Sciatic nerve (tissue), 2 donors: ENCODE measurements at regions of chr2 and their contacts with region 1.

Region 1: DNA sequence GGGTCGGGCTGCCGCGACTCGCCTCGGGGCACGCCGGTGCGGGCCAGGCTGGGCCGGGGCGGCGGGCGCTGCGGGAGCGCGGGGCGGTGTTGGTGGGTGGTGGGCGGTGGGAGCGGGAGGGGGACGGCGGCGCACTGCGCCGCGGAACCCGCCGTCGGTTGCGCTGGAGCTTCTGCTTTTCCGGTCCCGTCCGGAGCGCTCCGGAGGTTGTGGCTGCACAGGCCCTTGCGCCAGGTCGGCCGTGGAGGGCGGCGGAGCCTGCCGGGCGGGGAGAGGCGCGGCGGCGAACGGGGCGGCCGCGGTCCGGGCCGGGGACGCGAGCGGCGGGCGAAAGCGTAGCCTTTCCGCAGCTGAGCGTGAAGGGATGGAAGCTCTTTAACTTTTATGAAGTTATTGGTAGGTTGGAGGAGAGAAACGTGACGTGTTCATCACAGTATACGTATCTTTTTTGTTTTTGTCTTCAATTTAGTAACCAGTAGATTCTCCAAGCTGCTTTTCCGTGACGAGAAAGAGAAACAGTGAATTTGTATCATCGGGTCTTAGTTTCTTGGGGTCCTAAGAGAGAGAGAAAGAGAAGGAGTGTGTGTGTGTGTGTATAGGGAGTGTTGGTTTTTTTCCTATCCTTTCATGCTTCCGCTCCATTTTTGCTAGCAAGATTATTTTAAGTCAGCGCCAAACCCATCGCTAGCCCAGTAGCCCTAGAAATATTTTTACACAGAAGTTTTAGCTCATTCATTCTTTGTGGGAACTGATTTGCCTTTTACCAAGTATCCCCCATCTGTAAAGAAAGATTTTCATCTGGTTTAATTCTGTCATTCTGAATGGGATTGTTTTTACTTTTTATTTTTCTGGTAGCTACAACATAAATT is 533 bp downstream of the ATG4B start:
- DNase-seq: no peak
- ATAC-seq: no peak

Region 2: DNA sequence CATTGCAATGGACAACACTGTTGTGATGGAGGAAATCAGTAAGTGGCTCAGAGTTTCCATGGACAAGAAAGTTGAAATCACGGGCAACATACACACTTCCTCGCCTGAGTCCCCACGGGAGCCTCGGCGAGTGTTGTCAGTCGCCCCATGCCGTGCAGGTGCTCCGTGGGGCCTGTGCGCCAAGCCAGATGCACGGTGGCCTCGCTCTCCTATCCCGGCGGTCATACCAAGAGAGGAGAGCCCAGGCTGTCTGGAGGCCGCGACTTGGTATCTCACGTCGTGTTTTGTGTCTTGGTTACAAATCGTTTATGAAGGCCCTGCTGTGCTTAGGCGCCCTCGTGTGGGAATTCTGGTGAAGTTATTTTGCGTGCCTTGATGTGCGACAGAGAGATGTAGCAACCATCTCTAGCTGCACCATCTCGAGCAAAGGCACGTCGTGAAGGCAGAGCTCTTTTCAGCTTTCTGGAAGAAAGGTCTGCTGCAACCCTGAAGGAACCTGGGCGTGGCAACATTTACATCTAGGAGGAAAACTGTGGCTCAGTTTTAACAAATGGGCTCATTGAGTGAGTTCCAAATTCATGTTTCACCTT is 21.2 kb after region 1 on chr2:
- intact Hi-C with region 1: loop called (anchors 2 kb)
- DNase-seq: peak; percentile 74
- ATAC-seq: peak; percentile 78